Cardiac septum (tissue), 1 donor: ENCODE measurements at regions of chr17 and their contacts with region 1.

Region 1: DNA sequence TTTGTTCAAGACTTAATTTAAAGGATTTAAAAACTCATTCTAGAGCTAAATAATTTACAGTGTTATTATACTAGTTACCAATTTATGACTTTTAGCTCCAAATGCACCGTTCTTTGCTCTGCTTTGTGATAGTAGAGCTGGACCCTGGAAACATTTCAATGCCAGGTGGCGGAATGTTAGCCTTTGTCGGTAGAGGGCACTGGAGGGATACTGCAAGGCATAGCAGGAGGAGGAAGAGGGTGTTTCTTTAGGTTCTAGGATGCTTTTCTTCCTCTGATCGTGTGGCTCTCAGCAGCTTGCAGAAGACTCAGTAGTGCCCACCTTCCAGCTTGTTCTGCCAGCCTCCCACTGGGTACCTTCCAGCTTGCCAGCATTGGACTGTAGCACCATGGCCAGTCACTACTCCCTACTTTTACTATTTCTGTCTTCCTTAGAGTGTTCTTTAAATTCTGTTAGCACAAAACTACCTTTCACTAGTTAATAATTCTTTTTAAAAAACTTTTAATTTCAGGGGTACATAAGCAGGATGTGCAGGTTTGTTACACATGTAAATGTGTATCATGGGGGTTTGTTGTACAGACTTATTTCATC is 325.3 kb downstream of the UTP18 start:
- DNase-seq: no peak

Region 2: GRCh38 chr17:51630101-51630671 is 44.6 kb after region 1 on chr17:
- intact Hi-C with region 1: loop called (anchors 10 kb)
- DNase-seq: no peak

Region 3: GRCh38 chr17:51745979-51746378 is 160.4 kb after region 1 on chr17:
- intact Hi-C with region 1: loop called (anchors 10 kb)
- DNase-seq: no peak